Activated B cell treated with CpG ODN at 0.5 μM for 24 hours (primary cell): ENCODE measurements at regions of chr6 and their contacts with region 1.

Region 1: GRCh38 chr6:122399384-122400158 is at the start of gene HSF2:
- DNase-seq: peak; percentile 80
- ATAC-seq: peak; percentile 98
- H3K4me3 Mint-ChIP-seq: peak within 1 kb of the TSS; percentile 95
- H3K27ac Mint-ChIP-seq: peak within 1 kb of the TSS; percentile 88
- H3K4me1 Mint-ChIP-seq: peaks cover 23% of the 10 kb centered on the region
- H3K27me3 Mint-ChIP-seq: no peaks in the 10 kb centered on the region
- CTCF ChIP-seq: no peak
- total RNA-seq, gene HSF2: 9.0 and 9.3 TPM in 2 replicates

Region 2: GRCh38 chr6:121334299-121335086 is 1065.1 kb before region 1 on chr6 and contains the start of gene TBC1D32:
- CTCF ChIA-PET with region 1: no interaction called
- POLR2A ChIA-PET with region 1: no interaction called
- intact Hi-C with region 1: loop called (anchors 1 kb)
- DNase-seq: peak; percentile 88
- ATAC-seq: peak; percentile 89
- H3K4me3 Mint-ChIP-seq: peak within 1 kb of the TSS; percentile 94
- H3K27ac Mint-ChIP-seq: peak within 1 kb of the TSS; percentile 96
- H3K4me1 Mint-ChIP-seq: peaks cover 31% of the 10 kb centered on the region
- H3K27me3 Mint-ChIP-seq: no peaks in the 10 kb centered on the region
- CTCF ChIP-seq: no peak
- total RNA-seq, gene TBC1D32: 11.3 and 17.8 TPM in 2 replicates

Region 3: DNA sequence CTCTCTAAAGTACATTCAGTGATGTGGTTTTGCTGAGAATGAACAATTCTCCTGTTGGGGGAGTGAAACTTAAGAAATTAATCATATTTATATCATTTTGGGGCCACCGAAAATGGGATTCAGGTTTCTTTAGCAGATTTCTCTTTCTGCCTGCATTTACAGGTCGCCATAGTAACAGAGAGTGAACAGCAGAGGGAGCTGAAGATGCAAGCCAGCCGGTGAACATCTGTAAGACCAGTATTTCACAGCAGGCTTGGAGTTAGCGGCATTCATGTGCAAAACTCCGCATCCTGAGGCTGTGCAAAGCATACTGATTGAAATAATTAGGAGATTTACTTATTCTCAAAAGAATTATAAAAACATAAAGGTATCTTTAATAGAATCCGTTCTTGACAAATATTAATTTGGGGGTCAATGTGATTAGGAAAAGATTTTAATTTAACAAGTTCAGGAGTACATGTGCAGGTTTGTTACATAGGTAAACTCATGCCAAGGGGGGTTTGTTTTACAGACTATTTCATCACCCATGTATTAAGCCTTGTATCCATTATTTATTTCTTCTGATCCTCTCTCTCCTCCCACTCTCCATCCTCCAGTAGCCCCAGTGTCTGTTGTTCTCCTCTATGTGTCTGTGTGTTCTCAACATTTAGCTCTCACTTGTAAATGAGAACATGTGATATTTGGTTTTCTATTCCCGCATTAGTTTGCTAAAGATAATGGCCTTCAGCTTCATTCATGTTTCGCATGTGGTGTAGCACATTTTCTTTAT is 17.9 kb before region 1 on chr6:
- CTCF ChIA-PET with region 1: interaction called, 4 read pairs
- POLR2A ChIA-PET with region 1: no interaction called
- intact Hi-C with region 1: loop called (anchors 2 kb)
- DNase-seq: no peak
- ATAC-seq: peak; percentile 77
- H3K4me3 Mint-ChIP-seq: no peak overlapping the region
- H3K27ac Mint-ChIP-seq: no peak overlapping the region
- H3K4me1 Mint-ChIP-seq: no peaks in the 10 kb centered on the region
- H3K27me3 Mint-ChIP-seq: peaks cover 15% of the 10 kb centered on the region
- CTCF ChIP-seq: peak; percentile 40